Ascending aorta (tissue), 2 donors: ENCODE measurements at regions of chr11 and their contacts with region 1.

Region 1: GRCh38 chr11:77994412-77995362 is at the start of gene INTS4:
- DNase-seq: peak; percentile 97 to 99
- H3K4me3 ChIP-seq: peak within 1 kb of the TSS; percentile 63 to 65
- H3K27ac ChIP-seq: peak within 1 kb of the TSS; percentile 79
- H3K4me1 ChIP-seq: peaks cover 0 to 11% of the 10 kb centered on the region in 2 donors
- H3K27me3 ChIP-seq: no peaks in the 10 kb centered on the region
- CTCF ChIP-seq: peak in 1 of 3 experiments; percentile 15
- total RNA-seq, gene INTS4: 10.7 TPM

Region 2: GRCh38 chr11:78039919-78040671 is 45.4 kb after region 1 on chr11:
- intact Hi-C with region 1: loop called (anchors 1 kb)
- DNase-seq: peak in 1 of 2 donors; percentile 86
- H3K4me3 ChIP-seq: peak overlapping the region in 1 of 2 donors; percentile 39
- H3K27ac ChIP-seq: peak overlapping the region; percentile 81 to 84
- H3K4me1 ChIP-seq: peaks cover 2 to 12% of the 10 kb centered on the region in 2 donors
- H3K27me3 ChIP-seq: no peaks in the 10 kb centered on the region
- CTCF ChIP-seq: no peak